Caco-2 (cell line): ENCODE measurements at regions of chr10 and their contacts with region 1.

Region 1: GRCh38 chr10:116721547-116722392 is 20.6 kb downstream of the HSPA12A start:
- DNase-seq: peak in 1 of 2 experiments; percentile 39
- H3K4me3 ChIP-seq: no peak overlapping the region
- H3K4me3 Mint-ChIP-seq: peak overlapping the region; percentile 49
- H3K27ac Mint-ChIP-seq: peak overlapping the region; percentile 64
- H3K4me1 ChIP-seq: peaks cover 47% of the 10 kb centered on the region
- H3K4me1 Mint-ChIP-seq: peaks cover 24% of the 10 kb centered on the region
- H3K27me3 ChIP-seq: no peaks in the 10 kb centered on the region
- H3K27me3 Mint-ChIP-seq: no peaks in the 10 kb centered on the region
- CTCF ChIP-seq: no peak

Region 2: GRCh38 chr10:116587878-116588591 is 133.7 kb before region 1 on chr10:
- CTCF ChIA-PET with region 1: no interaction called
- POLR2A ChIA-PET with region 1: no interaction called
- intact Hi-C with region 1: no loop called
- DNase-seq: no peak
- H3K4me3 ChIP-seq: no peak overlapping the region
- H3K4me3 Mint-ChIP-seq: no peak overlapping the region
- H3K27ac Mint-ChIP-seq: no peak overlapping the region
- H3K4me1 ChIP-seq: peaks cover 16% of the 10 kb centered on the region; the same call in 1 of the 2 replicates
- H3K4me1 Mint-ChIP-seq: peaks cover 8% of the 10 kb centered on the region
- H3K27me3 ChIP-seq: no peaks in the 10 kb centered on the region
- H3K27me3 Mint-ChIP-seq: no peaks in the 10 kb centered on the region
- CTCF ChIP-seq: no peak

Region 3: DNA sequence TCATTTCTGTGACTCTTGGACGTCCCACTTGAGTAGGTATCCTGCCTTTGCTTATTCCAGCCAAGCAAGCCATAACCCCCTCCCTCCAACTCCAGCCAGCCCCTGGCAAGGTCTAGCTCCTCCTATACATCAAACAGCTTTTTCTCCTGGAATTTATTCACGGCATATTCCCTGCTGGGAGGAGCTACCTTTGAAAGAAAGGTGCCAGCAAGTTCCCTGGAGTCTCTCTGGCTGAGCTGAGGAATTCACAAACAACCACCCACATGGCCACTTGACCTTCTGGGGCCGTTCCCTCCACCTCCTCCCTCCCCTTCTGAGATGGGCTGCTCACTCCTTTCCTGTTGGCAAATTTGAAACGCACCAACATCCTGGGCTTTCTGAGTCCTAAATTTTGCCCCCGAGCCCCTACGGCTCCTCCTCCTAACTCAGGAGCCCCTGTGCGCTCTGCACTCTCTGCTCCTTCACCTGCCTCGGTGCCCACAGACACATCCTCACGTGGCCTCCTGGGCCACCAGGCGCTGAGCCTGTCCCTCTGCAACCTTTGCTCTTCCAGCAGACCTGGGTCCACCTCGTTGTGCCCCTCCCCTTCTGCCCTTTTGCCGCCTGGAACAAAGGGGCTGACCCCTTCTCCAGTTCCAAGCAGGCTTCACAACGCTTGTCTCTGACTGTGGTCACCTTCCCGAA is 27.4 kb before region 1 on chr10:
- CTCF ChIA-PET with region 1: interaction called, 3 read pairs
- POLR2A ChIA-PET with region 1: no interaction called
- intact Hi-C with region 1: loop called (anchors 1 kb)
- DNase-seq: peak; percentile 53 to 55
- H3K4me3 ChIP-seq: no peak overlapping the region
- H3K4me3 Mint-ChIP-seq: peak overlapping the region; percentile 20
- H3K27ac Mint-ChIP-seq: peak overlapping the region; percentile 37
- H3K4me1 ChIP-seq: peaks cover 13% of the 10 kb centered on the region; the same call in 1 of the 2 replicates
- H3K4me1 Mint-ChIP-seq: peaks cover 11% of the 10 kb centered on the region
- H3K27me3 ChIP-seq: no peaks in the 10 kb centered on the region
- H3K27me3 Mint-ChIP-seq: no peaks in the 10 kb centered on the region
- CTCF ChIP-seq: no peak

Region 4: GRCh38 chr10:116742367-116743265 is 20.8 kb after region 1 on chr10 and contains the start of gene HSPA12A:
- CTCF ChIA-PET with region 1: no interaction called
- POLR2A ChIA-PET with region 1: interaction called, 7 read pairs
- intact Hi-C with region 1: loop called (anchors 2 kb)
- DNase-seq: peak; percentile 62 to 87
- H3K4me3 ChIP-seq: peak within 1 kb of the TSS; percentile 62
- H3K4me3 Mint-ChIP-seq: peak within 1 kb of the TSS; percentile 69
- H3K27ac Mint-ChIP-seq: no peak within 1 kb of the TSS
- H3K4me1 ChIP-seq: no peaks in the 10 kb centered on the region
- H3K4me1 Mint-ChIP-seq: no peaks in the 10 kb centered on the region
- H3K27me3 ChIP-seq: no peaks in the 10 kb centered on the region
- H3K27me3 Mint-ChIP-seq: no peaks in the 10 kb centered on the region
- CTCF ChIP-seq: no peak
- total RNA-seq, gene HSPA12A: 22.9 and 27.0 TPM in 2 replicates